Cardiac septum (tissue), 1 donor: ENCODE measurements at regions of chr7 and their contacts with region 1.

Region 1: GRCh38 chr7:33716581-33717477 is 188.5 kb upstream of the BMPER start:
- DNase-seq: no peak

Region 2: DNA sequence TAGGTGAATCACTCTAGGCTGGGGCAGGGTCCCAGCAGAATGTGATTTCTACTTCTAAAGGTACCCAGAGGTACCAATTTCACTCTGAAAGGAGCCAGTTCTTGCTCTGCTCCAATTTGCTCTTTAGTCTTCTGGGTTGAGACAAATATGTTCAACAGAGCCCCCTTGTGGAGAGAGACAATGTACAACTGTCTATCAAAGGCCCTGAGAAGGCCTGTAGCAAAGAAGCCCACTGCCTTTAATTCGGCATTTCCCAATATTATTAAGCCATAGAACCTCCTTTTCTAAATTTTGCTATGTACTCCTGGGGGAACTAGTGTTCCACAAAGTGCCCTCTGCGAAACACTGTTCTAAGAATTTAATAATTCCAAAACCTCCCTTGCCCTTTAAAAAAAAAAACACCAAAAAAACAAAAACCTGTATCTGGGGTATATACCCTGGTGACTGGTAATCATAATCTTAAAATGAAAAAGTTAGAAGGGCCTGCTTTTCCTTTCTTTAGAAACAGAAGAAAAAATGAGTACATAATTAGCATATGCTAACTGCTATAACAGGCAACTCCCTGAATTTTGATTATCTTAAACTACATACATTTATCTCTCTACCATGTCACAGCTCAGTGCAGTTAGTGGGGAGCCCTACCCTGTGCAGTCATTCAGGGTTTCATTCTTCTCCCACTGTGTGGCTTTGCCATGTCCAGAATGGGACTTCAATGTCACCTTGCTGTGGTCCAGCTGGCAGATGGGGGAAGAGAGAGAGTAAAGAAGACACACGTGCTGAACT is 27.7 kb after region 1 on chr7:
- intact Hi-C with region 1: loop called (anchors 2 kb)
- DNase-seq: no peak

Region 3: DNA sequence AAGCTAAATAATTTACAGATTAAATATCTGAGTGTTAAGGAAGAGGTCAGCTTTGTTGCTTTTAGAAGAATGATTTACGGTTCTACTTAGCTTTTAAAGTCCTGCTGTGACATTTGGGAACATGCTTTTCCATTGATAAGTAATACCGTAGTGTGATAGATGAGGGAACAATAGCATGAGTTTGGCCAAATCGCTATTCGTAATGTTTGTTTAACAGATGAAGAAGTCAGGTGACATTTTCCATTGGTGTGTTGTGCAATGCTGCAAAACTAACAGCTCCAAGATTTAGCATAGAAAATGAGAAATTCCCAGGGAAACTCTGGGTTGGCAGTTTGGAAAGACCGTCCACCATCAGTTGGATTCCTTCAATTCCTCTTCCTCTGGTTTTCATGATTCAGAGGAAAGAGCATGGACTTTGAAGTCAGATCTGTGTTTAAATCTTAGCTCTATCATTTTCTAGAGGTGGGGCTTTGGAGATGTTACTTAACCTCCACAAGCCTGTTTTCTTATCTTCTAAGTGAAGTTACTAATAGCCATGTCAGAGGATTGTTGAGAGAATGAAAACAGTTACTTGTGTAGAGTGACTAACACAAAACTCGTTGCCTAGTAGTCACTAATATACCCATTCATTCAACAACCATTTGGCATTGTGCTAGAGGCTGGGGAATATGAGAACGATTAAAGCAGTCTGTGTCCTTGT is 48.1 kb after region 1 on chr7:
- intact Hi-C with region 1: no loop called
- DNase-seq: no peak

Region 4: DNA sequence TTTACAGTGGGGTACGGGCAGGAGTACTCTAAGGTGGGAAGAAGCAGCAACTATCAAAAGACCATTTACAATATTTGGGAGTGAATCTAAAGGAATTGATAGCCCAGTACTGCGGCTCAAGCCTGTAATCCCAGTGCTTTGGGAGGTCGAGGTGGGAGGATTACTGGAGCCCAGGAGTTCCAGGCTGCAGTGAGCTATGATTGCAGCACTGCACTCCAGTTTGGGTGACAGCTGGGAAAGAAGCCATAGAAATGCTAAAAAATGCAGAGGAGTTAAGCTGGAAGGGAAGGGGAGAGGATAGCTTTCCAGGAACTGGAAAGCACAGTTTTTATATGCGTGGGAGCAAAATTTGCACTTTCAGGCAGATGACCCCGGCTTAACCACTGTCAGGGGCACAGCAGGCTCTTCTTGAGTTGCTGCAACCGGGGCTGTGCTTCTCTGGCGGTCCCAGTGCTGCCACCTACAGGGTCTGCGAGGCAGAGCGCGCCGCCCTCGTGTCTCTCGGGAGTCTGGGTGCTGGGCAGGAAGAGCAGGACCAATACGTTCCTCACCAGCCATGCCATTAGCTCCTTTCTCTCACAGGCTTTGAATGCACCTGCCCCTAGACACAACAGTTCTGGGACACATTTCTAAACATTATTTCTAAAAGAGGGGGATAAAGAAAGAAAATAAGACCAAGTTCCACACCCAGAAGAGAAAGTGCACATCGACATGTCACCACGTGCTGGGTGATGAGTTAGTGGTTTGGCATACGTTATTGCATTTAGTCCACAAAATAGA is 178.4 kb after region 1 on chr7:
- intact Hi-C with region 1: loop called (anchors 5 kb)
- DNase-seq: peak; percentile 91

Region 5: DNA sequence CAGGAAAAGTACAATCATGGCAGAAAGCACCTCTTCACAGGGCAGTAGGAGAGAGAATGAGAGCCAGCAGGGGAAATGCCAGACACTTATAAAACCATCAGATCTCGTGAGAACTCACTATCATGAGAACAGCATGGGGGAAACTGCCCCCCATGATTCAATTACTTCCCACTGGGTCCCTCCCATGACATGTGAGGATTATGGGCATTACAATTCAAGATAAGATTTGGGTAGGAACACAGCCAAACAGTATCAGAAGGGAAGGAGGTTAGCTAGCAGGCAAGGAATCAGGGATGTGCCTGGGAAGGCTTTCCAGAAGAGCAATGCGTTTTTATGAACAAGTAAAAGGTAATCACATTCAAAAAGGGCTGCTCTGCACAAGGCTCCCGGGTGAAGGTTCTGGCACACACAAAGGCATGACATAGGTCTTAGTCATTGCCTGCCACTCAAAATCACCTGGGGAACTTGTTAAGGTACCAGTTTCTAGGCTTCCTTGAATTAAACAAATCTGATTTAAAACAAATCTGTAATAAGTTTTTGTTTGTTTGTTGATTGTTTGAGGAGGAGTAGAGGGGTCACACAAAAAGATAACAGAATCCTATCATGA is 229.4 kb after region 1 on chr7:
- intact Hi-C with region 1: no loop called
- DNase-seq: no peak